ENCODE measurements at regions of chr3 and their contacts with region 1.

Region 1: GRCh38 chr3:107740992-107741896 is 218.5 kb downstream of the BBX start:
- DNase-seq: no peak

Region 2: DNA sequence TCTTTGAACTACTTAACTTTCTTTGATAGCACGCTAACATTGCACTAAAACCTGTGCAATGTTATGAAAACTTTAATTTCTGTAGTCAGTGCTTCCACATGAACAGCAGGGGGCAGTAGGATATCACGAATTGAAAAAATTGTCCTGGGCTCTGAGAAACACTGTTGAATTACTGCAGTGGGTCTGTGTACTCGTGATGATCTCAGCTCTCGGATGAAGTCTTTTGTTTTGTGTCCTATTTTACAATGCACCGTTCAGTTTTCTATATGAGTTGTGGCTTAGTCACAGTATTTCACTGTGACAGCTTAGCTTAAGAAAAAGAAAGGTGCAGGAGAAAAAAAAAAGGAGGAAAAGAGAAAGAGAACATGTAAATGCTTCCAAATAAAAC is 505.3 kb before region 1 on chr3:
- intact Hi-C with region 1: loop called in 1 of 2 experiments (anchors 10 kb)
- DNase-seq: no peak

Region 3: DNA sequence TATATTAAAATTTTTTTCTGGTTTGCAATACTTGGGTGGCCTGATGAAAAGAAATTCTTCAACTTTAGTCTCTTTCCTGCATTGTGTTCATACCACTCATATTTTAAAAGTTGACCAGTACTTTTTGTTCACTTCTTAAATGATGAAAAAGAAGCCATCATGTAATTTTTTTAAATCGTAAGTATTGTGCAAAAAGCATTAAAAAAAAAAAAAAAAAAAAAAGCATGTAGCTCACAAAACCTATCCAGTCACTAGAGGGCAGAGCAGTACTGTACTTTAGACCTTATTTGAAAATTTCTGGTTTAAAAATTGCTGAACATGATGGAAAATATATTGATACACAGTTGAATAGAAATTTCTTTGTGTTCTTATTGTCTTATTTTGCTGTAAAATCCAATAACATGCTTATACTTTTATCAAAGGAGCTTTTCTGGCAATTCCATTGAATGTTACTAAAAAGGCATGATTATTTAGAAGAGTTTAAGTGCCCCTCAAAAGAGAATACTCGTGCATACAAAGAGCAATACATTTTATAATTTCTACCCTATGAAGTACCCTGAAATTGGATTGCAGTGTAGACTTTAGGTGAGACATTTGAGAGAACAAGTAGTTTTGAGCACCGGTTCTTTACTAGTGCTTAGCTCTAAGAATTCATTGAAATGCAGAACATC is 80.8 kb before region 1 on chr3:
- intact Hi-C with region 1: loop called in 1 of 2 experiments (anchors 5 kb)
- DNase-seq: no peak

Region 4: GRCh38 chr3:107680698-107681097 is 60.5 kb before region 1 on chr3:
- intact Hi-C with region 1: loop called in 1 of 2 experiments (anchors 10 kb)
- DNase-seq: no peak

Region 5: GRCh38 chr3:107938143-107938542 is 196.9 kb after region 1 on chr3:
- intact Hi-C with region 1: no loop called
- DNase-seq: no peak

Region 6: DNA sequence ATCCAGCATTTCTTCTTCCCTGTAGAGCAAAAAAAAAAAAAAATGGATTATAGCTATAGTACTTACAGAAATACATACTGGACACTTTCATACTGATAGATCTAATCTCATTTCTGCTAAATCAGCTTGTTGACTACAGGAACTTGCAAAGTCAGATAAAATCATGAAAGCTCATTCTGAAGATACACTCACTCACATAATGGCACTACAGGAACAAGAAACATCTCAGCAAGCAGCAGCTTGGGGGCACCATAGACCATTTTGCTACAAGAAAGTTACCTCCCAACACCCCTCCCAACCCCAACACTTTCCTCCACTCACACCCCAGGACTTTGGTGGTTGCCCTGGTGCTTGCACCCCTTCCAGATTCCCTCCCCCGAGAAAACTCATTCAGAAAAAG is 764.6 kb after region 1 on chr3:
- intact Hi-C with region 1: no loop called
- DNase-seq: no peak

Measured in posterior vena cava (tissue), 2 donors.